PC-9 (cell line): ENCODE measurements at regions of chr9 and their contacts with region 1.

Region 1: DNA sequence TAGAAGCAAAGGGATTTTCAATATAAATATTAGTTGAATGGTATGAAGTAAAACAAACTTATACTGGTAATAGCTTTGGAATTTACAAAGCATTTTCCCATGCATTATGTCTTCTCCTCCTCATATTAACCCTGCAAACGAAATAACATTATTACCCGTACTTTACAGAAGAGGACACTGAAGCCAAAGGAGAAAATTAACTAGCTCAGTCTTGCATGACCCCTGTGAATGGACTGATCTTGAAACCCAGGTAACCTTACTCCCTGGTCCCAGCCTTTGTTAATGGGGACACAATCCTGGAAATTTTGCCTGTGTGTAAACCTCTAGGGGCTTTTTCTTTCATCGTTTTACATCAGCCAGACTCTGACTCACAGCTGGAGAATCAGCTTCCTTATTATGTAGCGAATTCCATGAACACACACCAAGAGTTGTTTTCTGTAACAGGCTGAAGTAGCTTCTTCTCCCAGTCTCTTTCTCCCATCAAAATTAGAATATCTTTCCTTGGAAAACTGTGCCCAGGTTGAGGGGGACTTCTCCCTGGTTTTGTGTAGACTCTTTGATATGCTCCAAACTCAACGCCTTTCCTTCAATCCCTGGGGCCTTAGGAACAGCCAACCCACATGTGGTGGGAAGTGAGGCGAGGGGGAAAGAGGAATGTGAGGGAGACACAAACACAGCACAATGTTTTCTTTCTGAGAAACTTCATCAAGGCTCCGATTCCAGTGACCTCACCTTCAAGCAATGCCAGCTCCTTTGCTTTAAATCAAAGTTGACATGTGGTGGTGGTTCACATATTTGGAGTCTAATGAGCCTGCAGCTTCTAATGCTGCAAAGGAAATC is 480.9 kb upstream of the PAPPA start:
- DNase-seq: peak; percentile 69 to 87
- H3K4me3 ChIP-seq: no peak overlapping the region; the same call in 1 of the 2 replicates
- H3K27ac ChIP-seq: peak overlapping the region; percentile 100
- H3K4me1 ChIP-seq: peaks cover 46% of the 10 kb centered on the region
- H3K27me3 ChIP-seq: no peaks in the 10 kb centered on the region
- CTCF ChIP-seq: no peak

Region 2: DNA sequence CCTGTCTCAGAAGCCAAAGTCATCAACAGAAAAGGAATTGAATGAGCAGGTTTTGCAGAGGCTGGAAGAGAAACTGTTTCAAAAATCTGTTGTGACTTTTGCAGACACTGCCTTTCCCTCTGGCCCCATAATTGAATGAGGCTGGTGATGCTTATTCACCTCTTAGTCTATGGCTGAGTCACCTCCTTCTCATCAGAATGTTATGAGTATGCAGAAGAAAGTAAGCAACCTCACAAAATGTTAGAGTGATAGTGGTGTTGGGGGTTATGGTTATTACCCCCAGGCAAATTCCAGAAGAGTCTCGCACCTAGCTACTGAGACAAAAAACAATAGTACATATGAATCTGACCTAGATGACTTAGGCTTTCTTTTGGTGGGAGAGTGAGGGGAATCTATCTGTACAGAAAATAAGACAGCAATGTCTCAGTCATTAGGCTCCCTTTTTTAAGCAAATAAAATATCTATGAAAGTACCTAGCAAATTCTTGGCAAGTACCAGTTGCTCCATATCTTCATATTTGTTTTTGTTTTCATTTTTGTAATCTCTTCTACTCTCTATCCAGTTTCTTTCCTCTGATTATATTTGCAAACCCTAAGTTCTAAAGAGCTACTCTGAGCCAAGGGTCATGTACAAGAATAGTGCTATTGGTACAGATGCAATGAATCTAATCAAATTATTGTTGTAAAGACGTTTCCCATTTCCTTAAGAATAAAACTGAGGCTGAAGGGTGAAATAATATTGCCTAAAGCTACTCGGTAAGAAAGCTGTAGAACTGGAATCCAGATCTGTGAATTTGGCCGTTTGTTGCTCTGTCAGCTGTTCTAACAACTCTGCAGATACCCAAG is 56.7 kb before region 1 on chr9:
- CTCF ChIA-PET with region 1: no interaction called
- POLR2A ChIA-PET with region 1: interaction called, 19 read pairs
- intact Hi-C with region 1: loop called (anchors 1 kb)
- DNase-seq: peak; percentile 59 to 97
- H3K4me3 ChIP-seq: peak overlapping the region; percentile 27; the same call in 1 of the 2 replicates
- H3K27ac ChIP-seq: peak overlapping the region; percentile 98
- H3K4me1 ChIP-seq: peaks cover 39% of the 10 kb centered on the region
- H3K27me3 ChIP-seq: no peaks in the 10 kb centered on the region
- CTCF ChIP-seq: no peak

Region 3: DNA sequence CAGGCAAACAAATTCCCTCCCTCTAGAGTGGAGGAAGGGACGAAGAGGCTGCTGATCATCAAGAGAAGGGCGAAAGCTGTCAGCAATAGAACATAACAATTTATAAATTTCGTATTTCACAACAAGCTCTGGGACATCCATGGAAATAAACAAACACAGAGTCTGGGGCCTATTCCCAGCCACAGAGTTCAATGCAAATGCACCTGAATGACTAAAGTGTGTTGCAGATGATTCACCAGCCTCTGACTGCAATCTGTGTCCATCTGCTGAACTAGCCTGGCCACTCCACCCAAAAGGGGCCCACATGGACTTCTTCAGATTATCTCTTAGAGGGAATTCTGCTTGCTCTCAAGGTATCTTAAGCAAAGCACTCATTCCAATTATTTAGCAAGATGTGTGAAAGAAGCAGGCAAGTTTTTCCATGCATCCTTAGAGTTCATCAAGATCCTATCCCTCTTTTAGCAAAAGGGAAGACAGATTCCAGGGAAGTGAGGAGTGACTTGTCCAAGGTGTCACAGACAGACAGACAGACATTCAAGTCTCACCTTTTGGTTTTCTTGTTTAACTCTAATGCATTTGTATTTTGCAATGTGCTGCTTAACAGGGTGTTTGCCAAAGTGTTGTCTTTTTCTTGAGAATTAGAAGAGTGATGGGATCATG is 173.1 kb after region 1 on chr9:
- CTCF ChIA-PET with region 1: no interaction called
- POLR2A ChIA-PET with region 1: no interaction called
- intact Hi-C with region 1: loop called (anchors 10 kb)
- DNase-seq: peak; percentile 35 to 70
- H3K4me3 ChIP-seq: no peak overlapping the region
- H3K27ac ChIP-seq: no peak overlapping the region; the same call in 1 of the 2 replicates
- H3K4me1 ChIP-seq: peaks cover 14% of the 10 kb centered on the region; the same call in 1 of the 2 replicates
- H3K27me3 ChIP-seq: no peaks in the 10 kb centered on the region
- CTCF ChIP-seq: no peak

Region 4: DNA sequence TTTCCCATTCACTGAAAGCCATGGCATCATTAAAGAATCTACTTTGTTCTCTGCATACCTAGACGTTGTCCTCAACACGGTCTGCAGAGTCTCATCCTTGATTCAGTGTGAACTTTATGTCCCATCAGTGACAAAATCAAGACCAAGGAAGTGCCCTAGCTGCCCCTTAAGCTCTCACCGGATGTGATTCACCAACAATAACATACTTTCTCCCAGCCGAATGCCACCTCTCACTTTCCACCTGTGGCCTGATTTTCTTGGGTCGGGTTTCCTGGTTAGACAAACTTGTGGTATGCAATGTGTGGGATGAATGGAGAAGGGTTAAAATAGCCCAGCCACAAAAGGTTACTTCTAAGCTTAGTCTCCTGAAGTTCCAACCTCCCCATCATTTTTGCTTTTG is 335.6 kb after region 1 on chr9:
- CTCF ChIA-PET with region 1: no interaction called
- POLR2A ChIA-PET with region 1: no interaction called
- intact Hi-C with region 1: loop called (anchors 2 kb)
- DNase-seq: peak; percentile 74 to 93
- H3K4me3 ChIP-seq: peak overlapping the region; percentile 17; the same call in 1 of the 2 replicates
- H3K27ac ChIP-seq: peak overlapping the region; percentile 84
- H3K4me1 ChIP-seq: peaks cover 55% of the 10 kb centered on the region
- H3K27me3 ChIP-seq: no peaks in the 10 kb centered on the region
- CTCF ChIP-seq: no peak

Region 5: DNA sequence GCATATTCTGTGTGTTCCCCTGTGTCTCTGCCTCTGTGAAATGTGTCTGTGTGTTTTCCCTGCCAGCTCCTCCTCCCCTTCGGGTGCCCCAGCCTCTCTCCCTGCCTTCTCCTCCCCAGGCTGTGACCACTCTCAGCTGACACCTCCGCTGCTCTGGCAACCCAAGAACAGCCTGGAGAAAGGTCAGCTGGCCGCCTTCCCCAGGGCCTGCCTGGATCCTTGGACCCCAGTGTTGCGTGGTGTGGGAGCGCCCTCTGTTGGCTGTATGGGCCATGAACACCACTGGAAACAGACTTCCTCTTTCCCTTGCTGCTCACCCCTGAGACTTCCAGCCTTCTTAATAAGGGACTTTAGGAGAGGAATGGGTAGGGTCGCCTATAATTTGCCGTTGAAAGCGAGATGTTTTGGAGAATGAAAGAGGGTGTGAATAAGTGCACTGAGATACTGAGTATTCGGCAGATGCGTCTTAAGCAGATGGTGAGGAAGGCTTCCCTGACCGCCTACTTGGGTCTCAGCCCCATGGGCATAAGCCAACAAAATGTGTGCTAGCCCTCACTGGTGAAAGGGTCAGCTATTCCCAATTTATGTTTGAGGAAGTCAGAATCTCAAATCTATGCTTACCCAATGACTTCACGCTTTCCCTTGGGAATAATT is 899.5 kb after region 1 on chr9:
- CTCF ChIA-PET with region 1: no interaction called
- POLR2A ChIA-PET with region 1: no interaction called
- intact Hi-C with region 1: loop called (anchors 10 kb)
- DNase-seq: peak; percentile 57 to 75
- H3K4me3 ChIP-seq: no peak overlapping the region
- H3K27ac ChIP-seq: no peak overlapping the region
- H3K4me1 ChIP-seq: peaks cover 15% of the 10 kb centered on the region; the same call in 1 of the 2 replicates
- H3K27me3 ChIP-seq: no peaks in the 10 kb centered on the region
- CTCF ChIP-seq: peak; percentile 94